H1 (cell line): ENCODE measurements at regions of chr10 and their contacts with region 1.

Region 1: GRCh38 chr10:91551856-91552255 is 81.0 kb downstream of the PPP1R3C start:
- DNase-seq: peak; percentile 66 to 76
- H3K4me3 ChIP-seq: no peak overlapping the region; a peak in 1 of 8 replicates
- H3K27ac ChIP-seq: no peak overlapping the region
- H3K4me1 ChIP-seq: no peaks in the 10 kb centered on the region; a peak in 2 of 7 replicates
- H3K27me3 ChIP-seq: no peaks in the 10 kb centered on the region
- CTCF ChIP-seq: peak; percentile 91 to 99 (median 98)
- EP300 ChIP-seq: no peak
- POLR2A ChIP-seq: no peak
- RAD21 ChIP-seq: peak; percentile 89 to 91

Region 2: DNA sequence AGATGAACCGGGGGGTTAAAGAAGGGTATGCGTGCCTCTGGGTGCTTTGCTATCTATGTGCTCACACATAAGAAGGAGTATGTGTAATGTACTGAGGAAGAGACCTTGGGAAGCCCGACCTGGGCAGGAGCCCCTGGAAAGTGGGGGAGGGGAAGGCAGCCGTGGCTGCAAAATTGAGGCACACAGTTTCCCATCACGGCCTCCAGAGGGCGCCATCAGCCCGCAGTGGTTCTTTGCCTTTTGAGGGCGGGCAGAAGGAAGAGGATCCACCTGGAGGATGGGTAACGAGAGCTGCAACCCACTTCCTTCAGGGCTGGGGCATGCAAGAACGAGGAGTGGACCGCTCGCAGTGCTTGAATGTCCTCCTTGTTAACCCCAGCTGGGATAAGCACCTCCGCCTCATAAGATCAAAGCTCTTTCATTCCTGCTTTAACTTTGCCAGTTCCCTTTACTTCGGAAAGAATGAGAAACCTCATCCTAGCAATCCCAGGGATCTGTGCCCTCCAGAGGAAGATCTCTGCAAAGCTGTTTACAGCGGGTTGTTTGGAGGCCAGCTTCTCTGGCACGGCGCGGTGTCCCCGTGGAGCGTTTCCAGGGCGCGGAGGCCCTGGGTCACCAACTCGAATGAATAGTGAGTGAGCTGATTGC is 253.5 kb before region 1 on chr10:
- CTCF ChIA-PET with region 1: interaction called, 21 read pairs
- POLR2A ChIA-PET with region 1: no interaction called
- DNase-seq: peak; percentile 78 to 93
- H3K4me3 ChIP-seq: peak overlapping the region; percentile 14 to 47 (median 26); a peak in 6 of 8 replicates
- H3K27ac ChIP-seq: no peak overlapping the region
- H3K4me1 ChIP-seq: peaks cover 0 to 3% (median under 1%) of the 10 kb centered on the region in 4 experiments; a peak in 1 of 7 replicates
- H3K27me3 ChIP-seq: no peaks in the 10 kb centered on the region
- CTCF ChIP-seq: peak; percentile 89 to 97 (median 95)
- EP300 ChIP-seq: no peak
- POLR2A ChIP-seq: peak in 1 of 2 experiments; percentile 38; a peak in 1 of 3 replicates
- RAD21 ChIP-seq: peak; percentile 97

Region 3: GRCh38 chr10:91493313-91493712 is 58.5 kb before region 1 on chr10:
- CTCF ChIA-PET with region 1: interaction called, 16 read pairs
- POLR2A ChIA-PET with region 1: no interaction called
- DNase-seq: no peak
- H3K4me3 ChIP-seq: no peak overlapping the region
- H3K27ac ChIP-seq: no peak overlapping the region
- H3K4me1 ChIP-seq: no peaks in the 10 kb centered on the region
- H3K27me3 ChIP-seq: no peaks in the 10 kb centered on the region
- CTCF ChIP-seq: peak in 1 of 3 experiments; percentile 3; a peak in 1 of 4 replicates
- EP300 ChIP-seq: no peak
- POLR2A ChIP-seq: no peak
- RAD21 ChIP-seq: peak in 1 of 2 experiments; percentile 28; a peak in 3 of 4 replicates

Region 4: GRCh38 chr10:91567815-91568214 is 16.0 kb after region 1 on chr10:
- CTCF ChIA-PET with region 1: interaction called, 31 read pairs
- POLR2A ChIA-PET with region 1: no interaction called
- DNase-seq: no peak
- H3K4me3 ChIP-seq: no peak overlapping the region
- H3K27ac ChIP-seq: no peak overlapping the region
- H3K4me1 ChIP-seq: no peaks in the 10 kb centered on the region
- H3K27me3 ChIP-seq: no peaks in the 10 kb centered on the region
- CTCF ChIP-seq: no peak
- EP300 ChIP-seq: no peak
- POLR2A ChIP-seq: no peak
- RAD21 ChIP-seq: no peak

Region 5: DNA sequence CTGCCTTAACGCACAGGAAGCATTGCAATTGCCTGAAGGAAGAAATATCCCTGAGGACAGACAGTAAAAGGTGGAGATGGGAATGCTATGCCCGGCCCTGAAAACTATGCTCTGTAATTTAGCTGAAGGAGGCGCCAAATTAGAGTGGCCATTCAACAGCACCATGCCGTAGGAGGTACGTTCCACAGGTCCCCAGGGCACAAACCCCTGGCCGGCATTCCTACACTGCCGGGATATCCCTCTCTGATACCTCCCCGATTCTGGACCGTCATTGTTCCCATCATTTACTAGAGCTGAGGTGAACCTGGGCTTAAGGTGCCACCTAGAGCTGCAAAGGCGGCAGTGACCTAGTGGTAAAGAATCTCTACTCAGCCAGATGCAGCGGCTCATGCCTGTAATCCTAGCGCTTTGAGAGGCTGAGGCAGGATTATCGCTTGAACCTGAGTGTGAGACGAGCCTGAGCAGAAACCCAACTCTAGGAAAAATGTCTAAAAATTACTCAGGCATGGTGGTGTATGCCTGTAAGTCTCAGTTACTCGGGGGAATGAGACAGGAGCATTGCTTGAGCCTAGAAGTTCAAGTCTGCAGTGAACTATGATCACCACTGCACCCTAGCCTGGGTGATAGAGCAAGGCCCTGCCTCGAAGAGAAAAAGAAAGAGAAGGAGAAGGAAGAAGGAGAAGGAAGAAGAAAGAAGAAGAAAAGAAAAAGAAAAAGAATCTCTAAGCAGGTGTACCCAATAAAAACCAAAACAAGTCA is 193.4 kb after region 1 on chr10:
- CTCF ChIA-PET with region 1: interaction called, 12 read pairs
- POLR2A ChIA-PET with region 1: no interaction called
- DNase-seq: peak; percentile 60 to 61
- H3K4me3 ChIP-seq: peak overlapping the region in 2 of 4 experiments; percentile 19 to 24; a peak in 2 of 8 replicates
- H3K27ac ChIP-seq: no peak overlapping the region
- H3K4me1 ChIP-seq: peaks cover 0 to 4% (median 1%) of the 10 kb centered on the region in 4 experiments; a peak in 1 of 7 replicates
- H3K27me3 ChIP-seq: no peaks in the 10 kb centered on the region
- CTCF ChIP-seq: peak; percentile 63 to 91 (median 87)
- EP300 ChIP-seq: no peak
- POLR2A ChIP-seq: no peak
- RAD21 ChIP-seq: peak; percentile 95 to 97